Activated naive CD4-positive, alpha-beta T cell treated with anti-CD3 and anti-CD28 coated beads for 36 hours (primary cell): ENCODE measurements at regions of chrX and their contacts with region 1.

Region 1: GRCh38 chrX:123960042-123960611 is 1.4 kb upstream of the STAG2 start:
- DNase-seq: peak; percentile 91
- H3K4me3 Mint-ChIP-seq: peak overlapping the region; percentile 96
- H3K27ac Mint-ChIP-seq: peak overlapping the region; percentile 99
- H3K4me1 Mint-ChIP-seq: peaks cover 13% of the 10 kb centered on the region
- H3K27me3 Mint-ChIP-seq: no peaks in the 10 kb centered on the region

Region 2: GRCh38 chrX:123833387-123833786 is 126.7 kb before region 1 on chrX:
- CTCF ChIA-PET with region 1: interaction called, 12 read pairs
- intact Hi-C with region 1: loop called (anchors 1 kb)
- DNase-seq: peak; percentile 71
- H3K4me3 Mint-ChIP-seq: no peak overlapping the region
- H3K27ac Mint-ChIP-seq: no peak overlapping the region
- H3K4me1 Mint-ChIP-seq: peaks cover 8% of the 10 kb centered on the region
- H3K27me3 Mint-ChIP-seq: peaks cover 7% of the 10 kb centered on the region

Region 3: DNA sequence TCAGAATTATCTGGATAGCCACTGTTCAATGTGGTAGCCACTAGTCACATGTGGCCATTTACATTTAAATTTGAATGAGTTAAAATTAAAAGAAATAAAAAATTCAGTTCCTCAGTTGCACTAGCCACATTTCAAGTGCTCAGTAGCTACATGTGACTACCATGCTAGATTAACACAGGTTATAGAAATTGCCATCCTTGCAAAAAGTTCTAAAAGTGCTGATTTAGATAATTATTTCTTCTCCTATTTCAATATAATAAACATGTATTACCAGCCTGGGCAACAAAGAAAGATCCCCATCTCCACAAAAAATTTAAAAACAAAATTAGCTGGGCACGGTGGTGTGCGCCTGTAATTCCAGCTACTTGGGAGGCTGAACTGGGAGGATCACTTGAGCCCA is 10.3 kb before region 1 on chrX:
- CTCF ChIA-PET with region 1: no interaction called
- intact Hi-C with region 1: no loop called
- DNase-seq: no peak
- H3K4me3 Mint-ChIP-seq: no peak overlapping the region
- H3K27ac Mint-ChIP-seq: no peak overlapping the region
- H3K4me1 Mint-ChIP-seq: no peaks in the 10 kb centered on the region
- H3K27me3 Mint-ChIP-seq: no peaks in the 10 kb centered on the region

Region 4: GRCh38 chrX:123976706-123977316 is 16.7 kb after region 1 on chrX:
- CTCF ChIA-PET with region 1: interaction called, 5 read pairs
- intact Hi-C with region 1: loop called (anchors 1 kb)
- DNase-seq: no peak
- H3K4me3 Mint-ChIP-seq: no peak overlapping the region
- H3K27ac Mint-ChIP-seq: no peak overlapping the region
- H3K4me1 Mint-ChIP-seq: peaks cover 51% of the 10 kb centered on the region
- H3K27me3 Mint-ChIP-seq: no peaks in the 10 kb centered on the region

Region 5: GRCh38 chrX:124086411-124086810 is 126.3 kb after region 1 on chrX:
- CTCF ChIA-PET with region 1: interaction called, 3 read pairs
- intact Hi-C with region 1: loop called (anchors 1 kb)
- DNase-seq: peak; percentile 58
- H3K4me3 Mint-ChIP-seq: no peak overlapping the region
- H3K27ac Mint-ChIP-seq: peak overlapping the region; percentile 83
- H3K4me1 Mint-ChIP-seq: peaks cover 28% of the 10 kb centered on the region
- H3K27me3 Mint-ChIP-seq: no peaks in the 10 kb centered on the region

Region 6: GRCh38 chrX:124239911-124240310 is 279.8 kb after region 1 on chrX:
- CTCF ChIA-PET with region 1: no interaction called
- intact Hi-C with region 1: loop called (anchors 1 kb)
- DNase-seq: peak; percentile 72
- H3K4me3 Mint-ChIP-seq: peak overlapping the region; percentile 15
- H3K27ac Mint-ChIP-seq: peak overlapping the region; percentile 42
- H3K4me1 Mint-ChIP-seq: peaks cover 40% of the 10 kb centered on the region
- H3K27me3 Mint-ChIP-seq: no peaks in the 10 kb centered on the region

Region 7: DNA sequence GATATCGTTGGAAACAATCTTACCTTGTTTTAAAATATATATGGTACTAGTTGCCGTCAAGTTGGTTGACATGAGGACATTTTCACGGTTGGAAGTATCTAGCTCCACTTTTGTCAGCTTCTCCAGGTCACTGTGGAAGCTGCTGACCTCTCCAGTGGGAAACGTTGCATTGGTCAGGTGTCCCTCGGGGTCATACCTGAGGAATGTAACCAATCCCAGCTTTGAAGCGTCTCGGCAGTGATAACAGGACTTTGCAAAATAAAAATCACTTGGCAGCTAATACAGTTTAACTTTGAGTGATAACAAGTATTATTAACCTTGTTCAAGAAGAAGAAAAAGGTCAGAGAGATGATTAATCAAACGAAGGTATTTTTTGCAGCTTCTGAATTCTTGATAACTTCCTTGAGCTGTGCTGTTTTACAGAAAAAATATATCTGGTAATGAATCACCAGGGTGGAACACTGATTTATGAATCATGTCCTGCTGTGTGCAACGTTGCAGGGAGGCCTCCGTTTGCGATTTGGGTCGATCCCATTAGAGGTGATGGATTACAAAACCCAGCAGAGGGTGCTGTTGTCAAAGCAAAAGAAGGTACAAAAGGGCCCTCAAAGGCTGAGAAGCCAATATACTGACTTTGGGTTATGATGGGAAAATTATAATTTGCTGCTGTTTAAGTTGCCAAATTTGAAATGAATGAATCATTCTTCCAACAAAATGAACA is 446.3 kb after region 1 on chrX:
- CTCF ChIA-PET with region 1: no interaction called
- intact Hi-C with region 1: loop called (anchors 1 kb)
- DNase-seq: peak; percentile 83
- H3K4me3 Mint-ChIP-seq: no peak overlapping the region
- H3K27ac Mint-ChIP-seq: no peak overlapping the region
- H3K4me1 Mint-ChIP-seq: peaks cover 17% of the 10 kb centered on the region
- H3K27me3 Mint-ChIP-seq: no peaks in the 10 kb centered on the region